Naive thymus-derived CD4-positive, alpha-beta T cell (primary cell): ENCODE measurements at regions of chr17 and their contacts with region 1.

Region 1: GRCh38 chr17:76278952-76279741 is 14.0 kb downstream of the UBALD2 start:
- DNase-seq: peak; percentile 69 to 89 (median 81)
- ATAC-seq: peak; percentile 87
- H3K4me3 ChIP-seq: no peak overlapping the region
- H3K4me3 Mint-ChIP-seq: no peak overlapping the region
- H3K27ac ChIP-seq: no peak overlapping the region
- H3K27ac Mint-ChIP-seq: peak overlapping the region in 7 of 9 donors; percentile 22 to 74 (median 46)
- H3K4me1 ChIP-seq: peaks cover 5 to 17% of the 10 kb centered on the region in 2 donors
- H3K4me1 Mint-ChIP-seq: peaks cover 7 to 29% (median 27%) of the 10 kb centered on the region in 7 donors
- H3K27me3 ChIP-seq: no peaks in the 10 kb centered on the region
- H3K27me3 Mint-ChIP-seq: no peaks in the 10 kb centered on the region

Region 2: GRCh38 chr17:76014184-76014924 is 264.8 kb before region 1 on chr17:
- CTCF ChIA-PET with region 1: interaction called, 13 read pairs
- POLR2A ChIA-PET with region 1: interaction called, 3 read pairs
- intact Hi-C with region 1: loop called (anchors 1 kb)
- DNase-seq: peak; percentile 62 to 85 (median 77)
- ATAC-seq: peak; percentile 96
- H3K4me3 ChIP-seq: no peak overlapping the region
- H3K4me3 Mint-ChIP-seq: peak overlapping the region in 3 of 10 donors; percentile 40 to 68 (median 49)
- H3K27ac ChIP-seq: no peak overlapping the region
- H3K27ac Mint-ChIP-seq: peak overlapping the region in 5 of 9 donors; percentile 33 to 62 (median 40)
- H3K4me1 ChIP-seq: peaks cover 3 to 5% of the 10 kb centered on the region in 2 donors
- H3K4me1 Mint-ChIP-seq: peaks cover 0 to 11% (median 8%) of the 10 kb centered on the region in 7 donors
- H3K27me3 ChIP-seq: no peaks in the 10 kb centered on the region
- H3K27me3 Mint-ChIP-seq: no peaks in the 10 kb centered on the region

Region 3: DNA sequence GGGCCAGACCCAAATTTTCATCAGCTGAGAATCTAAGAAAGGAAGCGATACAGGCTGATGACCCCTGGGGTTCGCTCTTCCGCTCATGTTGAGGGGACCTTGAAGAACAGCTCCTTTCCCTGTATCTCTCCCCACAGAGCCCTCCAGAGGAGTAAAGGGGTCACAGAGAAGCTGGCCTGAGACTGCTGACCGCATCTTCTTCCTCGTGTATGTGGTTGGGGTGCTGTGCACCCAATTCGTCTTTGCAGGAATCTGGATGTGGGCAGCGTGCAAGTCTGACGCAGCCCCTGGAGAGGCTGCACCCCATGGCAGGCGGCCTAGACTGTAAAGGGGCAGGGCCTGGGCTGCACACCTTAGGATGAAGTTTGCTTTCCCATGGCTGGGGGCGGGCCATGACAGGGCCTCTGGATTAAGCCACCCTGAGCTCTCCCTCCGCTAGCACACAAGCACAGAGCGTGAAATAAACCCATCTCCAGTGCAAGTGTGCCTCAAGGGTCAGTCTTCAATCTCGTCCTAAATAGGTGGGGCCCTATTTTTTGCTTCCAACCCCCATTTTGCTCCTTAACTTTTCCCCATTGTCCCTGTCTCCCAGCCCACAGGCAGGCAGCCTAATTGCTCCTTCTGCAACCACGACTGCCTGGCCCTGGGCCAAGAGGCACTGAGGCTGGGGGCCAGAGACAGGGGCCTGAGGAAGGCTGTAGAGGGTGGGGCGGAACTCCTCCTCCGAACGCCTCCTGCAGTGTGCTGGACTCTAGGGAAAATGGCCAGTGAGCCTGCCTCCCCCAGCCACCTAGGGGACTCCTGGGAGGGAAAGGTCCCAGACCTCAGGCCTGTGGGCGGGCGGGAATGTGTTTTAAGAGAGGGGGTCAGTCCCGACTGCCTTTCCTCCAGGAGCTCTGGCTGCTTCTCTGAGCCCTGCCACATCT is 196.6 kb before region 1 on chr17:
- CTCF ChIA-PET with region 1: no interaction called
- POLR2A ChIA-PET with region 1: no interaction called
- intact Hi-C with region 1: no loop called
- DNase-seq: no peak
- ATAC-seq: no peak
- H3K4me3 ChIP-seq: no peak overlapping the region
- H3K4me3 Mint-ChIP-seq: no peak overlapping the region
- H3K27ac ChIP-seq: no peak overlapping the region
- H3K27ac Mint-ChIP-seq: peak overlapping the region in 6 of 9 donors; percentile 15 to 77 (median 73)
- H3K4me1 ChIP-seq: peaks cover 0 to 13% of the 10 kb centered on the region in 2 donors
- H3K4me1 Mint-ChIP-seq: peaks cover 8 to 27% (median 21%) of the 10 kb centered on the region in 7 donors
- H3K27me3 ChIP-seq: no peaks in the 10 kb centered on the region
- H3K27me3 Mint-ChIP-seq: peaks cover 0 to 22% (median 3%) of the 10 kb centered on the region in 5 donors

Region 4: GRCh38 chr17:76121932-76122430 is 157.2 kb before region 1 on chr17:
- CTCF ChIA-PET with region 1: interaction called, 191 read pairs
- POLR2A ChIA-PET with region 1: interaction called, 12 read pairs
- intact Hi-C with region 1: loop called (anchors 1 kb)
- DNase-seq: no peak
- ATAC-seq: peak; percentile 33
- H3K4me3 ChIP-seq: peak overlapping the region; percentile 63
- H3K4me3 Mint-ChIP-seq: peak overlapping the region in 7 of 10 donors; percentile 25 to 77 (median 53)
- H3K27ac ChIP-seq: peak overlapping the region; percentile 52
- H3K27ac Mint-ChIP-seq: peak overlapping the region; percentile 40 to 91 (median 73)
- H3K4me1 ChIP-seq: peaks cover 0 to 25% of the 10 kb centered on the region in 2 donors
- H3K4me1 Mint-ChIP-seq: peaks cover 10 to 39% (median 27%) of the 10 kb centered on the region in 7 donors
- H3K27me3 ChIP-seq: no peaks in the 10 kb centered on the region
- H3K27me3 Mint-ChIP-seq: no peaks in the 10 kb centered on the region

Region 5: DNA sequence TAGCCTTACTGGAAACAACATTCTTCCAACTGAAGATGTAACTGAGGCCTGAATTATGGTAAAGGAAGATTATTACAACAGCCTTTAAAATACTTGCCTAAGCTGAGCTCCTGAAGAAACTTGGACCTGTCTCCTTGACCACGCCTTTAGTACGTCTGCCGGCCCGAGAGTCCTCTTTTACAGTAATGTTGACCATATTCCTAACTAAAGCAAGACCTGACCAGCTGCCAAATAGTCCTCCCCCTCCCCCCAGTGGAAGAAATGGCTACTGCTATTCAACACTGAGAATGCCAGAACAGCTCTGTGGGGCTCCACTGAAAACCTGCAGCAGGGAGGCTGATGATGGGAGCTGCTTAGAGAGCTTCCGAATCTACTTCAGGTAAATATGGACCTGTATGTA is 125.5 kb before region 1 on chr17:
- CTCF ChIA-PET with region 1: interaction called, 14 read pairs
- POLR2A ChIA-PET with region 1: interaction called, 3 read pairs
- intact Hi-C with region 1: no loop called
- DNase-seq: no peak
- ATAC-seq: no peak
- H3K4me3 ChIP-seq: no peak overlapping the region
- H3K4me3 Mint-ChIP-seq: peak overlapping the region in 7 of 10 donors; percentile 11 to 81 (median 30)
- H3K27ac ChIP-seq: peak overlapping the region; percentile 52
- H3K27ac Mint-ChIP-seq: peak overlapping the region in 8 of 9 donors; percentile 93 to 99 (median 98)
- H3K4me1 ChIP-seq: peaks cover 13 to 48% of the 10 kb centered on the region in 2 donors
- H3K4me1 Mint-ChIP-seq: peaks cover 24 to 73% (median 64%) of the 10 kb centered on the region in 7 donors
- H3K27me3 ChIP-seq: no peaks in the 10 kb centered on the region
- H3K27me3 Mint-ChIP-seq: no peaks in the 10 kb centered on the region

Region 6: DNA sequence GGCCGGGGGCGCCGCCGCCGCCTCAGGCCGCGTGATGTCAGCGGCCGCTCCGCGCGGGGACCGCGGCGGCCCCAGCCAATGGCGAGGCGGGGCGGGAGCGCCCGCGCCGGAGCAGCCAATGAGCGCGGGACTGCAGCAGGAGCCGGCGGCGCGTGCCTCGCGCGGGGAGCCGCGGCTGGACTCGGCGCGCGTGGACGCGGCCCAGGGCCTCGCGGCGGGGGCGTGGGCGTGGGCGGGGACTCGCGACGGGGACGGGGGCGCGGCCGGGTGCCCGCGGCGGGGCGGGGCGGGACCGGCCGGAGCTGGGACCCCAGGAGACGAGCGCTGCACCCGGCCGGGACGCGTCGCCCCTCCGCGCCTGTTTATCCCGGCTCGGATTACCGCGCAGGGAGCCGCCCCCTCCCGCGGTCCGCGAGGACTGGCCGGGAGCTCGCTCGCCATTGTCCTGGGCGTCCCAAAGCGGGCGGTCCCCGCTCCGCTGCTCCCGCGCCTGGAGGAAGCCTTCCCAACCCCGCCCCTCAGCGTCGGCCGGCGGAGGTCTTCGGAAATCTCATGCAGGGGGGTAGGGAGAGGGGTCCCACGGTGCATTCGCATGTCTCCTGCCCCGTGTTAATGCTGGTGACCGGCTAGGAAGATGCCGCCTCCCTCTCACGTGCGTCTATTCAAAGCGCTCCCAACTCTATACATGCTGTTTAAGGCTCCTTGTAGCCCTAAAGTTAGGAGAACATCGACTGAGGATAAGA is 38.5 kb before region 1 on chr17 and contains the start of gene RNF157:
- CTCF ChIA-PET with region 1: interaction called, 11 read pairs
- POLR2A ChIA-PET with region 1: interaction called, 4 read pairs
- intact Hi-C with region 1: loop called in 1 of 2 experiments (anchors 5 kb)
- DNase-seq: peak; percentile 57 to 78 (median 69)
- ATAC-seq: peak; percentile 97
- H3K4me3 ChIP-seq: peak within 1 kb of the TSS; percentile 70
- H3K4me3 Mint-ChIP-seq: peak within 1 kb of the TSS; percentile 87 to 97 (median 94)
- H3K27ac ChIP-seq: peak within 1 kb of the TSS; percentile 78
- H3K27ac Mint-ChIP-seq: peak within 1 kb of the TSS; percentile 89 to 96 (median 92)
- H3K4me1 ChIP-seq: peaks cover 10 to 49% of the 10 kb centered on the region in 2 donors
- H3K4me1 Mint-ChIP-seq: peaks cover 27 to 80% (median 73%) of the 10 kb centered on the region in 7 donors
- H3K27me3 ChIP-seq: no peaks in the 10 kb centered on the region
- H3K27me3 Mint-ChIP-seq: peaks cover 0 to 4% (median 0%) of the 10 kb centered on the region in 5 donors
- total RNA-seq, gene RNF157: 49.2 to 96.3 (median 50.8) TPM

Region 7: DNA sequence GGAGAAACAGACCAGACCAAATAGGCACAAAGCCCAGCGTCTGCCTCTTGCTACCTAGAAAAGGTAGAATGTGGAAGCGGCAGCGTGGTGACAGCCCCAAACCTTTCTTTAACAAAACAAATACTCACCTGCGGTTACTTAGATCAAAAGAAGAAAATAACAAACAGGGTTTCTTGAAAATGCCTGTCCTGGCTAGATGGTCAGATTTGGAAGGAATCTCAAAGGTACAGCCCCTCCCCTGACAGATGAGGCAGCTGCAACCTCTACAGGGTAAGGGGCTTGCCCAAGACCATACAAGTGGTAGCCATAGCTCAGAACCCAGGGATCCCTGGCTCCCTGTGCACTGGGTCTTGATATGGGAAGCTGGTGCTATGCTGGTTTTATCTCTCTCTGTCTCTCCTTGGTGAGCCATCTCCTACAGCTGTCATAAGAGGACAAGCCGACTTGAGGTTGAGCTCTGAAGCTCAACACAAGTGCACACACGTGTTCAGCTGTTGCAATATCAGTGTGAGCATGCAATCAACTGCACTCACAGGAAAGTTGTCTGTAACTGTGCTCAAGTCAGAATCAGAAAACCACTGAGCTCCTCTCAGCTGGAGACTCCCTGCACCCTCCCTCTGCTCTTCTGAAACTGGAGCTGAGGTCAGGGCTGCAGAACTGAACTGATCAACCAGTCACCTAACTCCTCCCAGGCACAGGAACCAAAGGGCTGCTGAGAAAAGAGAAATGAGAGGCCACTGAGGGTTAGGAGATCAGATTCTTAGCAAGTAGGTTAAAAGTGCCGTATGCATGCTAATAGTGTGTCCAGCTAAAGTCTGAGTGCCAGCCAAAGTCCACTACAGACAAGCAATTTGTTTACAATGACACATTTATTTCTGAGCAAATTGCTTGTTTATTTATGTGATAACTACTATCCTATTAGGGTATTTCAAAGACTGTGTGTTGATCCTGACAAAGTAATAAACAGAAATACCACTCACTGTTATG is 32.8 kb before region 1 on chr17:
- CTCF ChIA-PET with region 1: interaction called, 15 read pairs
- POLR2A ChIA-PET with region 1: interaction called, 310 read pairs
- intact Hi-C with region 1: no loop called
- DNase-seq: peak in 7 of 9 donors; percentile 43 to 75 (median 52)
- ATAC-seq: peak; percentile 92
- H3K4me3 ChIP-seq: peak overlapping the region; percentile 8
- H3K4me3 Mint-ChIP-seq: peak overlapping the region; percentile 60 to 84 (median 75)
- H3K27ac ChIP-seq: peak overlapping the region; percentile 61
- H3K27ac Mint-ChIP-seq: peak overlapping the region; percentile 84 to 96 (median 92)
- H3K4me1 ChIP-seq: peaks cover 17 to 56% of the 10 kb centered on the region in 2 donors
- H3K4me1 Mint-ChIP-seq: peaks cover 34 to 84% (median 68%) of the 10 kb centered on the region in 7 donors
- H3K27me3 ChIP-seq: no peaks in the 10 kb centered on the region
- H3K27me3 Mint-ChIP-seq: no peaks in the 10 kb centered on the region

Region 8: DNA sequence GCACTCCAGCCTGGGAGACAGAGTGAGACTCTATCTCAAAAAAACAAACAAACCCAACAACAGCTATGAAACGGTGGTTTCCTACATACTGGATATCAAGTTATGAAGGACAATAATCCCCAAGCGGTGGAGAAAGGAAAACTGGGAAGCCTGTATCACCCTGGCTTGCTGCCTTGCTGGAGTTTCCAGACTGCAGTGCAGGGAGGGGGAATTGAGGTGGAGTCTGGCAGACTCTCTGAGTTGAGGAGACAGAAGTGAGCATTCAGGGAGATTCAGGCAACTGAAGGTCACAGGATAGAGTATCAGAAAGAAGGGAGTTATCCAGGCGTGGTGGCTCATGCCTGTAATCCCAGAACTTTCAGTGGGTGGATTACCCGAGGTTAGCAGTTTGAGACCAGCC is 17.0 kb after region 1 on chr17:
- CTCF ChIA-PET with region 1: interaction called, 5 read pairs
- POLR2A ChIA-PET with region 1: interaction called, 3 read pairs
- intact Hi-C with region 1: loop called in 1 of 2 experiments (anchors 2 kb)
- DNase-seq: no peak
- ATAC-seq: no peak
- H3K4me3 ChIP-seq: no peak overlapping the region
- H3K4me3 Mint-ChIP-seq: no peak overlapping the region
- H3K27ac ChIP-seq: no peak overlapping the region
- H3K27ac Mint-ChIP-seq: no peak overlapping the region
- H3K4me1 ChIP-seq: peaks cover 0 to 4% of the 10 kb centered on the region in 2 donors
- H3K4me1 Mint-ChIP-seq: peaks cover 0 to 4% (median 3%) of the 10 kb centered on the region in 7 donors
- H3K27me3 ChIP-seq: no peaks in the 10 kb centered on the region
- H3K27me3 Mint-ChIP-seq: no peaks in the 10 kb centered on the region

Region 9: GRCh38 chr17:76492989-76493501 is 213.9 kb after region 1 on chr17:
- CTCF ChIA-PET with region 1: no interaction called
- POLR2A ChIA-PET with region 1: no interaction called
- intact Hi-C with region 1: no loop called
- DNase-seq: peak in 2 of 9 donors; percentile 22 to 70
- ATAC-seq: peak; percentile 84
- H3K4me3 ChIP-seq: peak overlapping the region; percentile 65
- H3K4me3 Mint-ChIP-seq: peak overlapping the region; percentile 72 to 92 (median 82)
- H3K27ac ChIP-seq: peak overlapping the region; percentile 0
- H3K27ac Mint-ChIP-seq: peak overlapping the region; percentile 44 to 99 (median 76)
- H3K4me1 ChIP-seq: peaks cover 32 to 47% of the 10 kb centered on the region in 2 donors
- H3K4me1 Mint-ChIP-seq: peaks cover 12 to 76% (median 32%) of the 10 kb centered on the region in 7 donors
- H3K27me3 ChIP-seq: no peaks in the 10 kb centered on the region
- H3K27me3 Mint-ChIP-seq: no peaks in the 10 kb centered on the region